MCF 10A (cell line): ENCODE measurements at regions of chr7 and their contacts with region 1.

Region 1: DNA sequence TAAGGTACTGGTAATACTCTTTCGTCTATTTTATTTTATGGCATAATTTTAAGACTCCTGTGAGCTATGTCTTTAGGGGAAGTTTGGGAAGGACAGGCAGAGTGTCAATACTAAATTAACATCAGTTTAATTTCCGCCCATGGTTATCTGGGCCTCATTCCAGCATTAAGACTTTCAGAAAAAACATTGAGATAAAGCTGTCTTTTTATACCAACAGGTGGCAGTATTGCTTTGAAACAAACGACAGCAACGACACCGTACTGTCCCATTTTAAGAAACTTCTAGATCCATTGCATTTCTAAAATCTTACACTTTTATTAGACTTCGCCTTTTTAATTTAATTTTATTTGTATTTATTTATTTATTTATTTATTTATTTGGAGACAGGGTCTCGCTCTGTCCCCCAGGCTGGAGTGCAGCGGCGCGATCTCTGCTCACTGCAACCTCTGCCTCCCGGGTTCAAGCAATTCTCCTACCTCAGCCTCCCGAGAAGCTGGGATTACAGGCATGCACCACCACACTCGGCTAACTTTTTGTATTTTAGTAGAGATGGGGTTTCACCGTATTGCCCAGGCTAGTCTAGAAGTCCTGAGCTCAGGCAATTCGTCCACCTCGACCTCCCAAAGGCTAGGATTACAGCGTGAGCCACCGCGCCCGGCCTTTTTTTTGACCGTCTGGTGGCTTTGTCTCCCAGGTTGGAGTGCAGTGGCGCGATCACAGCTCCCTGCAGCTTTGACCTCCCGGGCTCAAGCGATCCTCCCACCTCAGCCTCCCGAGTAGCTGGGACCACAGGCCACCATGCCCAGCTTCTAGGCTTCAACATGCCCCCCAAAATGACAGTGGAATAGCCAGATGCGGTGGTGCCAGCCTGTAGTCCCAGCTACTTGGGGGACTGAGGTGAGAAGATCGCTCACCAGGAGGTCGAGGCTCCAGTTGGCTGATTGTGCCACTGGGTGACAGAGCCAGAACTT is 78.7 kb upstream of the C1GALT1 start:
- DNase-seq: peak; percentile 73
- H3K4me3 Mint-ChIP-seq: no peak overlapping the region
- H3K27ac Mint-ChIP-seq: no peak overlapping the region
- H3K4me1 Mint-ChIP-seq: peaks cover 32% of the 10 kb centered on the region
- H3K27me3 Mint-ChIP-seq: no peaks in the 10 kb centered on the region
- CTCF ChIP-seq: peak; percentile 52

Region 2: GRCh38 chr7:7114706-7115295 is 11.2 kb after region 1 on chr7:
- CTCF ChIA-PET with region 1: interaction called, 36 read pairs
- POLR2A ChIA-PET with region 1: interaction called, 3 read pairs
- intact Hi-C with region 1: no loop called
- DNase-seq: no peak
- H3K4me3 Mint-ChIP-seq: no peak overlapping the region
- H3K27ac Mint-ChIP-seq: no peak overlapping the region
- H3K4me1 Mint-ChIP-seq: peaks cover 6% of the 10 kb centered on the region
- H3K27me3 Mint-ChIP-seq: no peaks in the 10 kb centered on the region
- CTCF ChIP-seq: no peak

Region 3: GRCh38 chr7:7176421-7177043 is 72.9 kb after region 1 on chr7:
- CTCF ChIA-PET with region 1: interaction called, 111 read pairs
- POLR2A ChIA-PET with region 1: interaction called, 119 read pairs
- intact Hi-C with region 1: no loop called
- DNase-seq: peak; percentile 91
- H3K4me3 Mint-ChIP-seq: peak overlapping the region; percentile 43
- H3K27ac Mint-ChIP-seq: peak overlapping the region; percentile 82
- H3K4me1 Mint-ChIP-seq: peaks cover 31% of the 10 kb centered on the region
- H3K27me3 Mint-ChIP-seq: no peaks in the 10 kb centered on the region
- CTCF ChIP-seq: no peak

Region 4: DNA sequence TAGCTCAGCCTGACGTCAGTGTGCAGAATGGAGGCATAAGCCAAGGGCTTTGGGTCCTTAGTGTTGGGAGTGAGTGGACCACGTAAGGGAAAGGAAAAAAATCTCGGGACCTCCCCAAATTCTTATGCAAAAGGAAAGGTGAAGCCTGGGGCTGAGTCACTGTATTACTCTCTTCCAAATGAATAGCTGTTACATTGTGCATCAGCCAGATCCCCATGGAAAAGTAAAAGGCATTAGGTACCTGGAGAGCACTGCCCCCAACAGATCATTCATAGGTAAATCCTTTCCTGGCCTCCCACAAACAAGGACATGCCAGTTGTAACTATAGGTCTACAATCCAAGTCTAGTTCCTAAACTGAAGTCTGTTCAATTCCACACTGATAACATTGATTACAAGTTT is 249.2 kb after region 1 on chr7:
- CTCF ChIA-PET with region 1: interaction called, 9 read pairs
- POLR2A ChIA-PET with region 1: interaction called, 3 read pairs
- intact Hi-C with region 1: loop called (anchors 1 kb)
- DNase-seq: peak; percentile 74
- H3K4me3 Mint-ChIP-seq: no peak overlapping the region
- H3K27ac Mint-ChIP-seq: no peak overlapping the region
- H3K4me1 Mint-ChIP-seq: no peaks in the 10 kb centered on the region
- H3K27me3 Mint-ChIP-seq: no peaks in the 10 kb centered on the region
- CTCF ChIP-seq: peak; percentile 24

Region 5: GRCh38 chr7:7542251-7542835 is 438.7 kb after region 1 on chr7:
- CTCF ChIA-PET with region 1: interaction called, 24 read pairs
- POLR2A ChIA-PET with region 1: no interaction called
- intact Hi-C with region 1: loop called (anchors 2 kb)
- DNase-seq: no peak
- H3K4me3 Mint-ChIP-seq: no peak overlapping the region
- H3K27ac Mint-ChIP-seq: peak overlapping the region; percentile 62
- H3K4me1 Mint-ChIP-seq: peaks cover 18% of the 10 kb centered on the region
- H3K27me3 Mint-ChIP-seq: no peaks in the 10 kb centered on the region
- CTCF ChIP-seq: no peak